ENCODE measurements at regions of chr14 and their contacts with region 1.

Region 1: DNA sequence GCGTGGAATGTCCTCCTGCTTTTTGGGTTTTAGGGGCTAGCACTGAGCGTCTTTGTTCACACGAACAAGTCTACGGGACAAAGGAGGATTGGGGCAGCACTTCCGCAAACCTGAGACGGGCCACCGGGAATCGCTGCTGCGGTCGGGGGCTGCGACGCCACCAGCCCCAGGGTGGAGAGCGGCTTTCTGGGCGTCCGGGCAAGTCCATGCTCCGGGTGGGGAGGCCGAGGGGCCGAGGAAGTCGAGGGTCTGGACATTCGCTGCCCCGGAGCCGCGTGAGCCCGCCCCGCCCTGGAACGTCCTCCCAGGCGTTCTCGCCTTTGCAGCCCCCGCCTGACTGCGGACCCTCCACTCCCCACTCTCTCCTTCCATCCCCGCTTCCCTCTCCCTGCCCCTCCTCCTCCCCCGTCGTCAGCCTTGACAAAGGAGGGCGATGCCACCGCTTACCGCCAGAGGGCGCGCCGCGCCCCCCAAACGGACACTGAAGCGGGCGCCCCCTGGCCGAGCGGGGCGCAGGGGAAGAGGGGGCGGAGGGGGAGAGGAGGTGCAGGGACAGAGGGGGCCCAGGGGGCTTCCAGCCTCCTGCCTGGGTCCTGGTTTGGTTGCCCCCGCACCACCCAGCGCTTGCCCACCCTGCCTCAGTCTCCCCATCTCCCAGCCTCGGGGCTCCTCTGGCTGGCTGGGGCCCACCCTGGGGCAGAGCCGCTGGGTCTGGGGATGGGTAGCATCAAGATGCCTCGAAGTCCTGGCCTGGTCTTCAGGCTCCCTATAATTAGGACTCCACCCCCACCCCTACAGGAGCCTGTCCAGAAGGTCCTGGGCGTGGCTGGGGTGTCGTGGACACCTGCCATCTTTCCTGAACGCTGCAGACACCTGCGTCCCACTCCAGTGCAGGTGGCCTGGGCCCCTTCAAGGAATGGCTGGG is 39.1 kb upstream of the INF2 start:
- DNase-seq: no peak

Region 2: GRCh38 chr14:104708606-104709268 is 58.4 kb after region 1 on chr14:
- intact Hi-C with region 1: loop called (anchors 1 kb)
- DNase-seq: no peak